Ovary (tissue), 10 donors: ENCODE measurements at regions of chr5 and their contacts with region 1.

Region 1: DNA sequence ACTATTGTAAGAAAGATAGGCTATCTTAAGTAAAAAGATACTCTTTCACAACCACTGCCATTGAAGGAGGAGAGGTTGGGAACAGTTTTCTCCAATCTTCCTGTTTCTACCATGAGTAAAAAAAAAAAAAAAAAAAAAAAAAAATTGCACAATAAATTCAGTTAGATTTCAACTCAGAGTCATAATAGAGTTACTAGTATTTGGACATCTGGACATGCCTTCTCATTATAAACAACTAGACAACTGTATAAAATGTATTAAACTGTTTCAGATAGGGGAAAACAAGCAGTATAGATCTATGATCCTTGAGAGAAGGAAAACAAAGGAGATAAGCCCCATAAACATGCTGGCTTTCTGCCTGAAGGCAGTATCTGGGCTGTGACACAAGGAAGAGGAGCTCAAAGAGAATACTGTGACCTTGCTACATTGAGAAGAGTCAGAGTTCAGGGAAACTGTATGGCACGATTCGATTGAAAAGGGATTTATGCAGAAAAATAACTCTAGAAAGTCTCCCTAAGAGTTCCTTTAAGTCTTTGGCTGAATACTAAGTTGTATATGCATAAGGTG is 249.2 kb upstream of the POU5F2 start:
- DNase-seq: no peak
- H3K4me3 ChIP-seq: no peak overlapping the region
- H3K27ac ChIP-seq: no peak overlapping the region
- H3K4me1 ChIP-seq: peaks cover 2% of the 10 kb centered on the region
- H3K27me3 ChIP-seq: no peaks in the 10 kb centered on the region
- CTCF ChIP-seq: no peak
- EP300 ChIP-seq: no peak
- POLR2A ChIP-seq: no peak

Region 2: DNA sequence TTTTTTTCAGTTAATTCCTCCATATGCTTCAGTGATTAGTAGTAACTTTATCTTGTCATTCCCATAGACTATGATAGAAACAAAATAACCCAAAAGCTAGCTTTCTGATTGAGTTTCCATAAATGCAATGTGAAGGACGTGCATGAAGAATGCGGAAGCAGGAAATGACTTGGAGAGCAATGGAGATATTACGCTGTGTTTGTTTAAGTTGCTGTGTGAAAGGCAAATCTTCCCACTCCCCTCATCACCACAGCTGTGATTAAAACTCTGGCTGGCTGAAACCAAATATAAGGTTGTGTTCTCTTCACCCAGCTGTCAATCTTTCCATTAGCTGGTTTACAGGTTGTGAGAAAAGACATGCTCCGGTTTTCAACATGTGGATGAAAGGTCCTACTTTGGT is 493.5 kb before region 1 on chr5:
- intact Hi-C with region 1: no loop called
- DNase-seq: no peak
- H3K4me3 ChIP-seq: no peak overlapping the region
- H3K27ac ChIP-seq: no peak overlapping the region
- H3K4me1 ChIP-seq: no peaks in the 10 kb centered on the region
- H3K27me3 ChIP-seq: no peaks in the 10 kb centered on the region
- CTCF ChIP-seq: no peak
- EP300 ChIP-seq: no peak
- POLR2A ChIP-seq: no peak

Region 3: GRCh38 chr5:93850311-93850710 is 140.3 kb before region 1 on chr5:
- intact Hi-C with region 1: no loop called
- DNase-seq: no peak
- H3K4me3 ChIP-seq: no peak overlapping the region
- H3K27ac ChIP-seq: no peak overlapping the region
- H3K4me1 ChIP-seq: no peaks in the 10 kb centered on the region
- H3K27me3 ChIP-seq: no peaks in the 10 kb centered on the region
- CTCF ChIP-seq: no peak
- EP300 ChIP-seq: no peak
- POLR2A ChIP-seq: no peak

Region 4: DNA sequence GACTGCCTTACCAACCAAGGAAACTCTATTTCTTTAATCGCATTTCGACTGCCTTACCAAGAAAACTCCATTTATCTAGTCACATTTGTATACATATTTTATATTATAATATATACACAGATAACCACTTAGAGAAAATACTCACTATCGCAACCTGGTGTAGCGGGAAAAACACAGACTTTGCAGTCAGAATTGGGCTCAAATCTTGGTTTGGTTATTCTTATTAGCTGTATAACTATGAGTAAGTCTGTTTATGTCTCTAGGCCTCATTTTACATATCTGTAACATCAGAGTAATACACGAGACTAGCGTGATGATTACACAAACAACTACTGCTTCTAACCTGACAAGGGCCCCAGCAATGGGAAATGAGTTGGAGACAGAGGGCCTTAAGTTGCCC is 121.7 kb before region 1 on chr5:
- intact Hi-C with region 1: loop called in 1 of 4 experiments (anchors 5 kb)
- DNase-seq: no peak
- H3K4me3 ChIP-seq: no peak overlapping the region
- H3K27ac ChIP-seq: no peak overlapping the region
- H3K4me1 ChIP-seq: no peaks in the 10 kb centered on the region
- H3K27me3 ChIP-seq: no peaks in the 10 kb centered on the region
- CTCF ChIP-seq: no peak
- EP300 ChIP-seq: no peak
- POLR2A ChIP-seq: no peak